Caco-2 (cell line): ENCODE measurements at regions of chr2 and their contacts with region 1.

Region 1: GRCh38 chr2:136423516-136423996 is 305.6 kb upstream of the CXCR4 start:
- DNase-seq: peak; percentile 84 to 87
- H3K4me3 ChIP-seq: peak overlapping the region; percentile 57
- H3K4me3 Mint-ChIP-seq: peak overlapping the region; percentile 80
- H3K27ac Mint-ChIP-seq: peak overlapping the region; percentile 71
- H3K4me1 ChIP-seq: 0 out of 2 replicates have a peak, but pooled peaks cover 10% of the 10 kb centered on the region
- H3K4me1 Mint-ChIP-seq: peaks cover 17% of the 10 kb centered on the region
- H3K27me3 ChIP-seq: no peaks in the 10 kb centered on the region
- H3K27me3 Mint-ChIP-seq: peaks cover 2% of the 10 kb centered on the region
- CTCF ChIP-seq: peak; percentile 77 to 91

Region 2: DNA sequence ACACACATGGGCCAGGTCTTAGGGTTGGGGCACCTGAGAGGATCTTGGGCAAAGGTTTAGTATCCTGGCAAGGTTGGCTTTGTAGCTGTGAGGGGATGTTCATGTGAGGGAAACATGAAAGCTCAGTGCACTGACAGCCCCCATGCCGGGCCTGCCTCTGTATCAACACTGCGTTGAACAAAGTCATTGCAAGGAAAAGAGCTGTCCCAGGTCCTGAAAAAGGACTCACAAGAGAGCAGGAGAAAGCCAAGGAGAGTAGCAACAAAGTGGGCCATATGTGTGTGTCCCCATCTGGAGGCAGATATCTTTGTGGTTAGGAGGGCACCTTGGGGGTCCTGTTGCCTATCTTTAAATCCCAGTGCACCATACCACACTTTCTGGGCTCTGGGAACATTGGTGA is 104.0 kb after region 1 on chr2:
- CTCF ChIA-PET with region 1: no interaction called
- POLR2A ChIA-PET with region 1: no interaction called
- intact Hi-C with region 1: loop called (anchors 5 kb)
- DNase-seq: peak in 1 of 2 experiments; percentile 62
- H3K4me3 ChIP-seq: no peak overlapping the region
- H3K4me3 Mint-ChIP-seq: no peak overlapping the region
- H3K27ac Mint-ChIP-seq: no peak overlapping the region
- H3K4me1 ChIP-seq: no peaks in the 10 kb centered on the region
- H3K4me1 Mint-ChIP-seq: no peaks in the 10 kb centered on the region
- H3K27me3 ChIP-seq: no peaks in the 10 kb centered on the region; the same call in 1 of the 2 replicates
- H3K27me3 Mint-ChIP-seq: peaks cover 3% of the 10 kb centered on the region
- CTCF ChIP-seq: no peak

Region 3: DNA sequence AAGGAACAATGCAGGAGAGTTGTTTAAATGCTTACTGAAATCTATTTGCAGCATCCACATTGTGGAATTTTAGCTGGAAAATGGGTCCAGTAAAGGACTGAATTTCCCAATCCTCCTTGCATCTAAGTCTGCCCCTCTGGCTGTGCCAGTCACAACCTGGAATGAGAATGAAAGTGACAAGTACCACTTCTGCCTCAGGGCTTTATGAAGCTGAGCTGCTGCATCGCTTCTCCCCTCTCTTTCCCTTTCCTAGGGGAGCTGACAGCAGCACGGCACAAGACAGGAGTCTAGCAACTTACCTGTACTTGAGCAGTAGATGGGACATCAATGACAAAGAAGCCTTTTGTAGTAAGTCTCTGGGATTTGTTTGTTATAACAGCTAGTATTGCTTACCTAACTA is 314.5 kb after region 1 on chr2:
- CTCF ChIA-PET with region 1: interaction called, 6 read pairs
- POLR2A ChIA-PET with region 1: no interaction called
- intact Hi-C with region 1: loop called (anchors 1 kb)
- DNase-seq: peak in 1 of 2 experiments; percentile 7
- H3K4me3 ChIP-seq: no peak overlapping the region
- H3K4me3 Mint-ChIP-seq: peak overlapping the region; percentile 66
- H3K27ac Mint-ChIP-seq: peak overlapping the region; percentile 29
- H3K4me1 ChIP-seq: peaks cover 59% of the 10 kb centered on the region
- H3K4me1 Mint-ChIP-seq: peaks cover 24% of the 10 kb centered on the region
- H3K27me3 ChIP-seq: no peaks in the 10 kb centered on the region
- H3K27me3 Mint-ChIP-seq: no peaks in the 10 kb centered on the region
- CTCF ChIP-seq: no peak

Region 4: GRCh38 chr2:136920652-136921333 is 497.2 kb after region 1 on chr2:
- CTCF ChIA-PET with region 1: no interaction called
- POLR2A ChIA-PET with region 1: no interaction called
- intact Hi-C with region 1: loop called (anchors 5 kb)
- DNase-seq: no peak
- H3K4me3 ChIP-seq: no peak overlapping the region
- H3K4me3 Mint-ChIP-seq: no peak overlapping the region
- H3K27ac Mint-ChIP-seq: no peak overlapping the region
- H3K4me1 ChIP-seq: peaks cover 10% of the 10 kb centered on the region
- H3K4me1 Mint-ChIP-seq: peaks cover 12% of the 10 kb centered on the region
- H3K27me3 ChIP-seq: no peaks in the 10 kb centered on the region
- H3K27me3 Mint-ChIP-seq: no peaks in the 10 kb centered on the region
- CTCF ChIP-seq: no peak